ENCODE measurements at regions of chr11 and their contacts with region 1.

Region 1: DNA sequence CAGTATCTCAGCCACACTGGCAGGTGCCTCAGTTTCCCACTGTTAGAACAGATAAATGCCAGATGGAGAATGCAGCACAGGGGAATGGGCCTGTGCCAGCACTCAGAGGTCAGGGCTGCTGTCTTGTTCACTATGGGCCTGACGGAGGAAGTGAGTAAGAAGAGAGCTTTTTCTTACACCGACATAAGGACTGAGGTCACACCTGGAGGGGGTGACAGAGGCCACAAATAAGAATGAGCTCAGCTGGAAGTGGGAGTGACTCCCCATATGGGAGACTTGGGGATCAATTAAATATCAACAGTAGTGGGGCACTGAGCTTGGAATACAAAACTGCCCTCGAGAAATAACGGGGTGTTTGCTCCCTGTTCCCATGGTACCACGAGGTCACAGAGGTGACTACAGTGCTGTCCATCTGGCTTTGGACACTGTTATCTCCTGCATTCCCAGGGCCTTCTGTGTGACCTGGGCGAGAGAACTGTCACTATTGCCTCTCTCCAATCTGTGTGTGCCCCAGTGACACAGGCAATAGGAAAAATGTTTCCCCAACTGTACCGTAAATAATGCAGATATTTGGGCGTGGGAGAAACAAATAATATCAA is 94.1 kb upstream of the NNMT start:
- DNase-seq: no peak
- ATAC-seq: no peak
- H3K4me3 ChIP-seq: no peak overlapping the region
- H3K27ac ChIP-seq: no peak overlapping the region
- H3K4me1 ChIP-seq: no peaks in the 10 kb centered on the region
- H3K27me3 ChIP-seq: peaks cover 4 to 6% of the 10 kb centered on the region in 2 experiments; a peak in 2 of 4 replicates
- CTCF ChIP-seq: no peak
- EP300 ChIP-seq: no peak
- POLR2A ChIP-seq: no peak
- RAD21 ChIP-seq: no peak

Region 2: GRCh38 chr11:114154271-114155047 is 47.7 kb before region 1 on chr11:
- CTCF ChIA-PET with region 1: no interaction called
- POLR2A ChIA-PET with region 1: no interaction called
- RAD21 ChIA-PET with region 1: no interaction called
- SMC1A ChIA-PET with region 1: no interaction called
- in situ Hi-C with region 1: no loop called
- intact Hi-C with region 1: loop called (anchors 5 kb)
- DNase-seq: no peak
- ATAC-seq: no peak
- H3K4me3 ChIP-seq: no peak overlapping the region
- H3K27ac ChIP-seq: no peak overlapping the region
- H3K4me1 ChIP-seq: no peaks in the 10 kb centered on the region
- H3K27me3 ChIP-seq: no peaks in the 10 kb centered on the region
- CTCF ChIP-seq: no peak
- EP300 ChIP-seq: no peak
- POLR2A ChIP-seq: no peak
- RAD21 ChIP-seq: no peak

Region 3: GRCh38 chr11:114377612-114378267 is 175.6 kb after region 1 on chr11:
- CTCF ChIA-PET with region 1: no interaction called
- POLR2A ChIA-PET with region 1: no interaction called
- RAD21 ChIA-PET with region 1: no interaction called
- SMC1A ChIA-PET with region 1: no interaction called
- in situ Hi-C with region 1: no loop called
- intact Hi-C with region 1: no loop called
- DNase-seq: no peak
- ATAC-seq: no peak; the same call in 2 of the 3 replicates
- H3K4me3 ChIP-seq: no peak overlapping the region
- H3K27ac ChIP-seq: no peak overlapping the region
- H3K4me1 ChIP-seq: no peaks in the 10 kb centered on the region
- H3K27me3 ChIP-seq: peaks cover 2 to 20% of the 10 kb centered on the region in 2 experiments; a peak in 3 of 4 replicates
- CTCF ChIP-seq: no peak
- EP300 ChIP-seq: no peak
- POLR2A ChIP-seq: no peak
- RAD21 ChIP-seq: no peak